ENCODE measurements at regions of chr9 and their contacts with region 1.

Region 1: GRCh38 chr9:92790542-92791527 is 26.2 kb upstream of the BICD2 start:
- DNase-seq: peak; percentile 84
- H3K4me3 ChIP-seq: no peak overlapping the region
- H3K27ac ChIP-seq: no peak overlapping the region
- H3K4me1 ChIP-seq: no peaks in the 10 kb centered on the region
- H3K27me3 ChIP-seq: peaks cover 4 to 8% of the 10 kb centered on the region in 2 experiments
- CTCF ChIP-seq: peak; percentile 68 to 73
- POLR2A ChIP-seq: no peak

Region 2: DNA sequence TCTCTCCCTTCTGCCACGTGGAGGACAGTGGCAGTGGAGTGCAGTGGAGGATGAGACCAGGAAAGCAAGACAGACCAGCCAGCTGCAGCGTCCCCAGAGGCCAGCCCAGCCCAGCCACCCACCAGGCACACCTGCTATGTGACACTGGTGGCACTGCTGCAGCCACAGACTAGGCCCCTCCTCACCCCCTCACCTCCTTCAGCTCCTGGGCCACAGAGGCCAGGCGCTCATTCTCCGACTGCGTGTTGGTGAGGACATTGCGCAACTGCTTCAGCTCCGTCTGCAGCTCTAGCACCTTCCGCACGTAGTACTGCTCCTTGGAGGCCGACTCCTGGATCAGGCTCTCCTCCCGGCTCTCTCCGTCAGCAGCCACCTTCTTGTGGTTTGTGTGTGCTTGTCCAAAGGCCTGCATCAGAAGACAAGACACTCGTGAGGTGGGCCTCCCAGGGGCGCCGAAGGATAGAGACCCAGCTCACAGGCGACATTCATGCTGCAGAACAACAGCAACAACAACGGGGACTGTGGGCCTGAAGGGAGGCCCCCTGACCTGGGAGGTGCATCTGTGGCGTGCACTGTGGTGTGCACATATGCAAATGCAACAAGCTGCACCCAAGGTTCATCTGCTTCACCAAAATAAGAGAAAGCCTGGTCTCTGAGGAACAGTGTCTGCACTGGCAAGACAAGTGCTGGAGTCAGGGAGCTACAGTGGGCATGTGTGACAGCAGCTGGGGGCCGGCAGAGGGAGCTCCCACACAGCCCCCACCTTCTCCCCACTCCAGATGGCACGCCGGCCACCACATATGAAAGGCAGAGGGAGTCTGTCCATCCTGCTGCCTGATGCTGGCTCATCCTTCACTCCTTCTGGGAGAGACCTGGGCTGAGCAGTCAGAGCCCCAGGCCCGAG is 61.8 kb before region 1 on chr9:
- CTCF ChIA-PET with region 1: interaction called, 32 read pairs
- POLR2A ChIA-PET with region 1: no interaction called
- dilution Hi-C with region 1: no loop called
- intact Hi-C with region 1: no loop called
- DNase-seq: no peak
- H3K4me3 ChIP-seq: no peak overlapping the region
- H3K27ac ChIP-seq: no peak overlapping the region
- H3K4me1 ChIP-seq: peaks cover 11% of the 10 kb centered on the region
- H3K27me3 ChIP-seq: no peaks in the 10 kb centered on the region
- CTCF ChIP-seq: peak; percentile 14 to 44
- POLR2A ChIP-seq: no peak

Region 3: GRCh38 chr9:92774274-92774673 is 16.6 kb before region 1 on chr9:
- CTCF ChIA-PET with region 1: interaction called, 13 read pairs
- POLR2A ChIA-PET with region 1: no interaction called
- dilution Hi-C with region 1: no loop called
- intact Hi-C with region 1: no loop called
- DNase-seq: no peak
- H3K4me3 ChIP-seq: no peak overlapping the region
- H3K27ac ChIP-seq: no peak overlapping the region
- H3K4me1 ChIP-seq: no peaks in the 10 kb centered on the region
- H3K27me3 ChIP-seq: peaks cover 2 to 7% of the 10 kb centered on the region in 2 experiments
- CTCF ChIP-seq: no peak
- POLR2A ChIP-seq: no peak

Measured in endothelial cell of umbilical vein (primary cell).